ENCODE measurements at regions of chr12 and their contacts with region 1.

Region 1: GRCh38 chr12:19643635-19644034 is 204.3 kb downstream of the AEBP2 start:
- DNase-seq: peak; percentile 94
- H3K4me3 ChIP-seq: no peak overlapping the region
- H3K27ac ChIP-seq: peak overlapping the region; percentile 82
- H3K4me1 ChIP-seq: peaks cover 37% of the 10 kb centered on the region
- H3K27me3 ChIP-seq: no peaks in the 10 kb centered on the region
- CTCF ChIP-seq: peak; percentile 83

Region 2: DNA sequence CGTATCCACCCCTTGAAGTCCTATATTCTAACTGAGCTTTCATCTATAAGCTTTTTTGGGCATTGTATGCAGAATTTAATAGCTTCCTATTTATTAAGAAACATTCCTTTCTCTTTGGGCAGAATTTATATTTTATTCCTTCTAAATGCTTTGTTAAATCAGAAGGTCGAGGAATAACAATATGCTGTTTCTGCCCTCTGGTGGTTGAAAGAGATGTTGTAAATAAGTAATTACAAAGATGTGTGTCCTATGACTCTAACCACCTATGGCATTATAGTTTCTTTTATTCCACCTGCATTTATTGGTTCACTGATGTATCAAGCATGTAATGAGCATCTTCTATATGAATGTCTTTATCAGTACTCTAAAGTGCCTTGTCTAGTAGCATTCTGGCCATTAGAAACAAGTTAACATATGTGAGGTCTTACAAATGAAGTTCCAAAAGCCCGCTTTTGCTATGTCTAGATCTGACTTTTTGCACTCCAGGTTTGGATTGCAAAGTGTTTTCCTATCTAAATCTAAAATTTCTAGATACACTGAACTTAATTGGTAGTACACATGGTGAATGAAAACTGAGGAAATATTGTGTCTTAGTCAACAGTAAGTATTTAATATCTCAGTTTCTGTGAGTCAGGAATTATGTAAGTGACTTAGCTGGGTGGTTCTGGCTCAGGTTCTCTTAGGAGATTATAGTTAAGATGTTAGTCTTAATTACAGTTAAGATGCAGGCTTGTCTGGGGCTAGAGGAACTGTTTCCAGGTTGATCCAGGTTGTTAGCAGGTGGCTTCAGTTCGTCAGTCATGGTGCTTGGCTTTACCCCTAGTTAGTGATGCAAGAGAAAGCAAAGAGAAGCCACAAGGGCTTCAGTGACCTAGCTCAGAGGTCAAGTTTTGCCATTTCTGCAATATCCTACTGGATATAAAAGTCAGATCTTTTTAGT is 456.6 kb before region 1 on chr12:
- CTCF ChIA-PET with region 1: no interaction called
- POLR2A ChIA-PET with region 1: no interaction called
- intact Hi-C with region 1: loop called (anchors 10 kb)
- DNase-seq: peak; percentile 57
- H3K4me3 ChIP-seq: no peak overlapping the region
- H3K27ac ChIP-seq: no peak overlapping the region
- H3K4me1 ChIP-seq: no peaks in the 10 kb centered on the region
- H3K27me3 ChIP-seq: no peaks in the 10 kb centered on the region
- CTCF ChIP-seq: peak; percentile 73

Region 3: DNA sequence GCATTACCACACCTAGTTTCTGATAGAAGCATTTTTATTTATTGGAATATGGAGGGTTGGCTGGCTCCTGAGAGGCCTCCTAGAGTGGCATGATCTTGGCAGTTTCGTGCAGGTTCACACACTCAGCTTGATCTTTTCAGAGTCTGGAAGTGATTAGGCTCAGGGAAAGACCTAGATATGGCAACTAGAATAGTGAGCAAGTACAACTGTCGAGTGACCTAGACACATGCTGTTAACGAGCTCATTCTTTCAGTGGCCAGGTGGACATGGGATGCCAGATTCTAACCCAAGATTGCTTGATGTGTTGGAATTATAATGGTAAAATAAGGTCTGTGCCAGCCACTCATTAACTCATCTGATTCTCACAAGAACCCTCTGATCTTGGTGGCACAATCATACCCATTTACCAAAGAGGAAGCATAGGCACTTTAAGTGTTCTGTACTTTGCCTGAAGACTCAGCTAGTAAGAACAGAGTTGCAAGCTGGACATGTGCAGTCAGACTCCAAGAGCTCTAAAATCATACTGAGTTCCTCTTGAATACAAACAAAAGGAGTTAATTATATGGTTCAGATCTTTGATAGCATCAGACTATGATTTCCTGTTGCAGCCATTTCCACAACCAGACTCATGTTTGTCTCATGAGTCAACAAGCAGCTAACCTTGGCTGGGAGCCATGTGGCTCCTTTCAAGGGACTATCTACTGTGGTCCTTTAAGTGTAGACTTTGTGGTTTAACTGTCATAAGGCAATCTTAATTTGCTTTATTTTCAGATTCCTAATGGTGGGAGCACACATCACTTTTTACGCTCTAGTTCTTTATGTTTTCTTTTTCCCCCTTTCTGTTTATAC is 369.9 kb before region 1 on chr12:
- CTCF ChIA-PET with region 1: interaction called, 4 read pairs
- POLR2A ChIA-PET with region 1: no interaction called
- intact Hi-C with region 1: loop called (anchors 10 kb)
- DNase-seq: peak; percentile 96
- H3K4me3 ChIP-seq: no peak overlapping the region
- H3K27ac ChIP-seq: no peak overlapping the region
- H3K4me1 ChIP-seq: peaks cover 48% of the 10 kb centered on the region
- H3K27me3 ChIP-seq: no peaks in the 10 kb centered on the region
- CTCF ChIP-seq: no peak

Region 4: GRCh38 chr12:19382111-19382526 is 261.5 kb before region 1 on chr12:
- CTCF ChIA-PET with region 1: no interaction called
- POLR2A ChIA-PET with region 1: no interaction called
- intact Hi-C with region 1: no loop called
- DNase-seq: peak; percentile 83
- H3K4me3 ChIP-seq: no peak overlapping the region
- H3K27ac ChIP-seq: no peak overlapping the region
- H3K4me1 ChIP-seq: peaks cover 13% of the 10 kb centered on the region
- H3K27me3 ChIP-seq: no peaks in the 10 kb centered on the region
- CTCF ChIP-seq: no peak

Region 5: DNA sequence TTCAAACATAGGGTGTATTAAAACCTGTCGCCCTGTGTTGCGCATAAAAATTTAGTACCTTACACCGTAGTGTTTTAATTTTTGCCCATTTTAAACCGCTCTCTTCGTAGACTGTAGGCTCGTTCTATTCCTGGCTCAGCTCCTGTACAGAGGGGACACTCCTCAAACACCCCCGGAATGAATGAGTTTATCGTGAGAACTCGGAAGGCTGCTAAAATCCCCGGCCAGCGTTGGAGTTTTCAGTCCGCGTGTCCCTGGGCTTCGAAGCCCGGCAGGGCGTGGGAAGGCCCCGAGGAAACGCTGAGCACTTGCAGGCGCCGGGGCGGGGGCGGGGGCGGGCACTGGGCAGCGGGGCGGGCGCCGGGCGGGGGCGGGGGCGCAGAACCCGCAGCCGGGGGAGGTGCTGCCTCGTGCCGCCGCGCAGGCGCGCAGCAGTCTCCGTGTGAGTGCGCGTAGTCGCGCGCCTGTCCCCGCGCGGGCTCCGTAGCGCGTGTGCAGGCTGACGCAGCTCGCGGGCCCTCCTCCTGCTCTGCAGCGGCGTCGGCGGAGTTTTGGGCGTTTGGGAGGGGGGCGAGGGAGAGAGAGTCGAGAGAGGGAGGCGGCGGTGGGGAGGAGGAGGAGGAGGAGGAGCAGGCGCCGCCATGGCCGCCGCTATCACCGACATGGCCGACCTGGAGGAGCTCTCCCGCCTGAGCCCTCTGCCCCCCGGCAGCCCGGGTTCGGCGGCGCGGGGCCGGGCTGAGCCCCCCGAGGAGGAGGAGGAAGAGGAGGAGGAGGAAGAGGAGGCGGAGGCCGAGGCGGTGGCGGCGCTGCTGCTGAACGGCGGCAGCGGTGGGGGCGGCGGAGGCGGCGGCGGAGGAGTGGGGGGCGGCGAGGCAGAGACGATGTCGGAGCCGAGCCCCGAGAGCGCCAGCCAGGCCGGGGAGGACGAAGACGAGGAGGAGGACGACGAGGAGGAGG is 204.3 kb before region 1 on chr12 and contains the start of gene AEBP2:
- CTCF ChIA-PET with region 1: no interaction called
- POLR2A ChIA-PET with region 1: no interaction called
- intact Hi-C with region 1: loop called (anchors 10 kb)
- DNase-seq: peak; percentile 97
- H3K4me3 ChIP-seq: peak within 1 kb of the TSS; percentile 96
- H3K27ac ChIP-seq: peak within 1 kb of the TSS; percentile 92
- H3K4me1 ChIP-seq: peaks cover 10% of the 10 kb centered on the region
- H3K27me3 ChIP-seq: no peaks in the 10 kb centered on the region
- CTCF ChIP-seq: no peak
- total RNA-seq, gene AEBP2: 47.6 and 48.8 TPM in 2 replicates

Region 6: DNA sequence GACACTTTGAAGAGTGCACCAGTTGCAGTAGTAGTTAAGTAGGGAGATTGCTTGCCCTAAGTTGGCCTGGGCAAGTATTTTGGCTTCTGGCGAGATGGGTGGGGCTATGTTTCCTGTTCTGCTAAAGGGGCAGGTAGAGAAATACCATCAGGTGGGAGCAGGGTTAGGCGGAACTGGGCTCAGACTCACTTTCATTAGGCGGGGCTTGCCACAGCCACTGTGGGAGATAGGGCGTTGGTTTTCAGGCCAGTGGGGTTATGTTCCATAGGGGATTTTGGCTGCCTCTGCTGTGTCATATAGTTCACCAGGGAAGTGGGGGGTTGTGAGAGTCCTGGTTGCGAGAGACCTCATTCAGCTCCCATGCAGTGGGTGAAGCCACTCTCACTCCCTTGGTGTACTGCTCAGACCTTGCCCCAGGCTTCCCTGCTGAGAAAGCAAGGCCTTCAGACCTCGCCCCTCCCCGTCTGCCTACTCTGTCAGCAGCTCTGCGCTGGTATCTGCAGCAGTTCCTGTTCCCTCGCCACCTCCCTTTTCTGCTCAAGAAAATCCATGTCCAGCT is 161.0 kb before region 1 on chr12:
- CTCF ChIA-PET with region 1: no interaction called
- POLR2A ChIA-PET with region 1: no interaction called
- intact Hi-C with region 1: no loop called
- DNase-seq: no peak
- H3K4me3 ChIP-seq: no peak overlapping the region
- H3K27ac ChIP-seq: no peak overlapping the region
- H3K4me1 ChIP-seq: peaks cover 15% of the 10 kb centered on the region
- H3K27me3 ChIP-seq: no peaks in the 10 kb centered on the region
- CTCF ChIP-seq: no peak

Region 7: GRCh38 chr12:19507823-19508222 is 135.8 kb before region 1 on chr12:
- CTCF ChIA-PET with region 1: no interaction called
- POLR2A ChIA-PET with region 1: interaction called, 3 read pairs
- intact Hi-C with region 1: loop called (anchors 5 kb)
- DNase-seq: peak; percentile 44
- H3K4me3 ChIP-seq: no peak overlapping the region
- H3K27ac ChIP-seq: no peak overlapping the region
- H3K4me1 ChIP-seq: peaks cover 10% of the 10 kb centered on the region
- H3K27me3 ChIP-seq: no peaks in the 10 kb centered on the region
- CTCF ChIP-seq: peak; percentile 46; the same call in 1 of the 2 replicates

Region 8: GRCh38 chr12:19572920-19573558 is 70.6 kb before region 1 on chr12:
- CTCF ChIA-PET with region 1: no interaction called
- POLR2A ChIA-PET with region 1: no interaction called
- intact Hi-C with region 1: loop called (anchors 5 kb)
- DNase-seq: peak; percentile 83
- H3K4me3 ChIP-seq: no peak overlapping the region
- H3K27ac ChIP-seq: peak overlapping the region; percentile 76
- H3K4me1 ChIP-seq: peaks cover 55% of the 10 kb centered on the region
- H3K27me3 ChIP-seq: no peaks in the 10 kb centered on the region
- CTCF ChIP-seq: peak; percentile 80

Region 9: GRCh38 chr12:20006871-20007730 is 363.5 kb after region 1 on chr12:
- CTCF ChIA-PET with region 1: no interaction called
- POLR2A ChIA-PET with region 1: no interaction called
- intact Hi-C with region 1: no loop called
- DNase-seq: no peak
- H3K4me3 ChIP-seq: no peak overlapping the region
- H3K27ac ChIP-seq: no peak overlapping the region
- H3K4me1 ChIP-seq: no peaks in the 10 kb centered on the region
- H3K27me3 ChIP-seq: no peaks in the 10 kb centered on the region
- CTCF ChIP-seq: no peak

Measured in A673 (cell line).